Prostate gland (tissue), 2 donors: ENCODE measurements at regions of chr19 and their contacts with region 1.

Region 1: GRCh38 chr19:18846862-18847548 is 15.2 kb downstream of the UPF1 start:
- DNase-seq: peak; percentile 72
- H3K4me3 ChIP-seq: no peak overlapping the region
- H3K27ac ChIP-seq: peak overlapping the region; percentile 33 to 53
- H3K4me1 ChIP-seq: peaks cover 33% of the 10 kb centered on the region
- H3K27me3 ChIP-seq: no peaks in the 10 kb centered on the region
- CTCF ChIP-seq: peak; percentile 60 to 87 (median 81)
- POLR2A ChIP-seq: no peak

Region 2: GRCh38 chr19:18464646-18465045 is 382.4 kb before region 1 on chr19:
- intact Hi-C with region 1: loop called (anchors 5 kb)
- DNase-seq: peak; percentile 94
- H3K4me3 ChIP-seq: no peak overlapping the region
- H3K27ac ChIP-seq: peak overlapping the region; percentile 74
- H3K4me1 ChIP-seq: peaks cover 20% of the 10 kb centered on the region
- H3K27me3 ChIP-seq: no peaks in the 10 kb centered on the region
- CTCF ChIP-seq: peak in 2 of 4 experiments; percentile 5
- POLR2A ChIP-seq: peak; percentile 39

Region 3: GRCh38 chr19:18594096-18594823 is 252.7 kb before region 1 on chr19:
- intact Hi-C with region 1: loop called (anchors 2 kb)
- DNase-seq: peak; percentile 72
- H3K4me3 ChIP-seq: peak overlapping the region; percentile 20 to 35
- H3K27ac ChIP-seq: no peak overlapping the region
- H3K4me1 ChIP-seq: peaks cover 10% of the 10 kb centered on the region
- H3K27me3 ChIP-seq: no peaks in the 10 kb centered on the region
- CTCF ChIP-seq: peak; percentile 78 to 94 (median 90)
- POLR2A ChIP-seq: no peak

Region 4: DNA sequence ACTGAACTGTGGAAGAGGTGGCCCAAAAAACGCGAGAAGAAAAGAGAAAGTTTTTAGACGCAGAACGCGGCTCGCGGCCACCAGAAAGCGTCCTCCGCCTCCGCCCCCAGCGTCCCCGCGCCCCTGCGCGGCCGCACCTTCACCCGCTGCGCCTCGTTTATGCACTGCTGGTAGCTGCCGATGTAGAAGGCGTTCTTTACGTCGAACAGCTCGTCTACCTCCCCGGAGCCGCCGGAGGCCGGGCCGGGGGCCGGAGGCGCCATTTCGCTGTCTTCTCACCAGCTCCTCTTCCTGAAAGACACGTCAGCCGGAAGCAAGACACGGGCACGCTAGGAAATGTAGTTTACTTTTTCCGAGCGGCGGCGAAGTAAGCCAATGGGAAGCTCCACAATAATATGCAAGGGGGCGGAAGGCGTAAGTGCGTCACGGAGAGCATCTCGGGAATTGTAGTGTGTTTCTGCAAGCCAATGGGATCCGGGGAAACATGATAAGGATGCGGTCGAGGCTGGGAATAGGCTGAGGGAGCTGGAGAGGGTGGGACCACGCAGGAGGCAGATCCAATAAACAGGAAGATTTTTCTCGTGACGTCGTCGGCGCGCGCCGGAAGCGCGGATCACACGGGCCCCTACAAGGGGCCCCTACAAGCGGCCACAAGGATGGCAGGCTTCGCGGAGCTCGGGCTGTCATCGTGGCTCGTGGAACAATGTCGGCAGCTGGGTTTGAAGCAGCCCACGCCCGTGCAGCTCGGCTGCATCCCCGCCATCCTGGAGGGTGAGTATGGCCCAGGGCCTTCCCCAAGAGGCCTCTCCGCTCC is 72.3 kb after region 1 on chr19 and contains the starts of genes COPE and DDX49:
- intact Hi-C with region 1: no loop called
- DNase-seq: peak; percentile 99
- H3K4me3 ChIP-seq: peak within 1 kb of the TSS; percentile 69 to 89
- H3K27ac ChIP-seq: peak within 1 kb of the TSS; percentile 79 to 83
- H3K4me1 ChIP-seq: peaks cover 12% of the 10 kb centered on the region
- H3K27me3 ChIP-seq: no peaks in the 10 kb centered on the region
- CTCF ChIP-seq: peak in 2 of 4 experiments; percentile 6 to 10
- POLR2A ChIP-seq: peak; percentile 59
- total RNA-seq, gene COPE: 402 to 553 TPM
- total RNA-seq, gene DDX49: 72.0 to 91.2 TPM